ENCODE measurements at regions of chr16 and their contacts with region 1.

Region 1: GRCh38 chr16:8816967-8817655 is 19.5 kb downstream of the PMM2 start:
- DNase-seq: no peak
- ATAC-seq: peak; percentile 89
- H3K4me3 Mint-ChIP-seq: peak overlapping the region; percentile 67
- H3K27ac Mint-ChIP-seq: peak overlapping the region; percentile 90
- H3K4me1 Mint-ChIP-seq: peaks cover 18% of the 10 kb centered on the region
- H3K27me3 Mint-ChIP-seq: no peaks in the 10 kb centered on the region

Region 2: DNA sequence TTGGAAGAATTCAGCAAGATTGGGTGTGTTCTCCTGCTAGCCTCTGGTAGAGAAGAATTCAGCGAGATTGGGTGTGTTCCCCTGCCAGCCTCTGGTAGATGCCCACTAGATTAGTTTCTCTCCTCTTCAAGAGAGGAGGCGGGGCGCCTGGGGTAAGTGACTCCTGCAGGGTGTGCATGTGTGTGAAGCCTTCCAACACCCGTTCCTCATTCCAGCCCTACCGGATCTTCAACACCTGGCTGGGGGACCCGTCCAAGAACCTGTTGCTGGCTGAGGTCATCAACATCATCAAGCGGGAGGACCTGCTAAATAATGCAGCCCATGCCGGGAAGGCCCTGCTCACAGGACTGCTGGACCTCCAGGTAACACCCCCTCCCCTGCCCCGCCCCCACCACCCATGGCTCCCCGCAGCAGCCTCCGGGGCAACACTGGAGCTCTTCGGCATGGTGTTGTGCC is 41.0 kb before region 1 on chr16:
- POLR2A ChIA-PET with region 1: no interaction called
- DNase-seq: no peak
- ATAC-seq: no peak
- H3K4me3 Mint-ChIP-seq: no peak overlapping the region
- H3K27ac Mint-ChIP-seq: no peak overlapping the region
- H3K4me1 Mint-ChIP-seq: no peaks in the 10 kb centered on the region
- H3K27me3 Mint-ChIP-seq: no peaks in the 10 kb centered on the region

Region 3: GRCh38 chr16:8786324-8786723 is 30.8 kb before region 1 on chr16:
- POLR2A ChIA-PET with region 1: no interaction called
- DNase-seq: no peak
- ATAC-seq: no peak
- H3K4me3 Mint-ChIP-seq: no peak overlapping the region
- H3K27ac Mint-ChIP-seq: no peak overlapping the region
- H3K4me1 Mint-ChIP-seq: no peaks in the 10 kb centered on the region
- H3K27me3 Mint-ChIP-seq: no peaks in the 10 kb centered on the region

Region 4: GRCh38 chr16:8797364-8798173 is 19.5 kb before region 1 on chr16 and contains the starts of genes PMM2 and TMEM186:
- POLR2A ChIA-PET with region 1: interaction called, 11 read pairs
- DNase-seq: peak; percentile 90
- ATAC-seq: peak; percentile 98
- H3K4me3 Mint-ChIP-seq: peak within 1 kb of the TSS; percentile 93
- H3K27ac Mint-ChIP-seq: peak within 1 kb of the TSS; percentile 89
- H3K4me1 Mint-ChIP-seq: peaks cover 34% of the 10 kb centered on the region
- H3K27me3 Mint-ChIP-seq: no peaks in the 10 kb centered on the region
- total RNA-seq, gene PMM2: 36.4 to 38.5 TPM
- total RNA-seq, gene TMEM186: 11.9 to 12.6 TPM

Measured in activated naive CD8-positive, alpha-beta T cell treated with anti-CD3 and anti-CD28 coated beads, Interleukin-2, amount 10 ng/mL, durations not matched to agents 7 days and 5 days (primary cell).